RWPE1 (cell line): ENCODE measurements at regions of chr1 and their contacts with region 1.

Region 1: GRCh38 chr1:30668024-30668423 is 55.4 kb downstream of the MATN1 start:
- DNase-seq: no peak
- H3K27ac ChIP-seq: no peak overlapping the region
- CTCF ChIP-seq: no peak

Region 2: DNA sequence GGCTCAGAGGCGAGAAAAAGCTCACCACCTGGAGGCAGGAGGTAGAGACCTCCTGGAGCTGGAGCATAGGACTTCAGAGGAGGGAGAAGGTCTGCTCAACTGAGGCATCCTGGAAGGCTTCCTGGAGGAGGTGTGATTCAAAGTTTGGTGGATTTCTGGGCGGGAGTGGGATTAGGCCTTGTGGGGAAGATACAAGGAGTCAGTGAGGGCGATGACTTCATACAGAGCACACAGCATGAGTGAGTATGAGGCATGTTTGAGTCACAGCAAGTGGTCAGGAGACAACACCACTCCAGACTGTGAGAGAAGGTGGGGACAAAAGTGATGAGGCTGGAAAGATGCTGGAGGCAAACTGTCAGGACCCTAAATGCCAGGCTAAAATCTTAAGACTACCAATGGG is 22.2 kb before region 1 on chr1:
- CTCF ChIA-PET with region 1: no interaction called
- POLR2A ChIA-PET with region 1: no interaction called
- DNase-seq: peak; percentile 59
- H3K27ac ChIP-seq: no peak overlapping the region
- CTCF ChIP-seq: no peak

Region 3: DNA sequence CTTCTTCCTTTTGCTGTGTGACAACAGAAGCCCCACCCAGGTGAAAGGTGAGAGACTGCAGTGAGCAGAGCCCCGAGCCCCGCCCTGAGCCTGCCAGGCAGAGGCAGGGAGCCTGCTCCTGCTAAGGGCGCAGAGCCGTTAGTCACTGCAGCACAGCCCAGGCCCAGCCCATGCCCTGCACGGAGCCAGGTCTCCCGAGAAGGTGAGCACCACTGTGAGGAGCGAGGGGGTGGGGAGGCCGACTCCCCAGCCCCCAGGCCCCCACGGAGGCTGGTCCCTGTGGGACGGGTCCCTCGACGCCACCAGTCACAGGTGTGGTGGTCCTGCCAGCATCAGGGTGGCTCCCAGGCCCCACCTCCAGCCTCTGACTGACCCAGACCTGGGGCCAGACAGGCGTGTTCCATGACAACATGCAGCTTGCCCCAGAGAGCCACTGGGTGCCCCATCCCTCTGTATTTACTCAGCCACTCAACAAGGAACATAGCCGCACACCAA is 10.2 kb before region 1 on chr1:
- CTCF ChIA-PET with region 1: no interaction called
- POLR2A ChIA-PET with region 1: no interaction called
- DNase-seq: no peak
- H3K27ac ChIP-seq: no peak overlapping the region
- CTCF ChIP-seq: no peak

Region 4: GRCh38 chr1:30689901-30690645 is 22.0 kb after region 1 on chr1:
- CTCF ChIA-PET with region 1: interaction called, 10 read pairs
- POLR2A ChIA-PET with region 1: no interaction called
- DNase-seq: peak; percentile 44
- H3K27ac ChIP-seq: no peak overlapping the region
- CTCF ChIP-seq: no peak

Region 5: GRCh38 chr1:30763651-30764248 is 95.7 kb after region 1 on chr1:
- CTCF ChIA-PET with region 1: no interaction called
- POLR2A ChIA-PET with region 1: no interaction called
- DNase-seq: no peak
- H3K27ac ChIP-seq: no peak overlapping the region
- CTCF ChIP-seq: no peak

Region 6: GRCh38 chr1:30801771-30802198 is 133.8 kb after region 1 on chr1:
- CTCF ChIA-PET with region 1: no interaction called
- POLR2A ChIA-PET with region 1: no interaction called
- DNase-seq: peak; percentile 51
- H3K27ac ChIP-seq: no peak overlapping the region
- CTCF ChIP-seq: peak; percentile 94